ENCODE measurements at regions of chr17 and their contacts with region 1.

Region 1: GRCh38 chr17:8248751-8249607 is at the start of gene PFAS:
- DNase-seq: peak; percentile 93
- ATAC-seq: peak; percentile 59
- H3K4me3 ChIP-seq: peak within 1 kb of the TSS; percentile 100
- H3K27ac ChIP-seq: peak within 1 kb of the TSS; percentile 94
- H3K4me1 ChIP-seq: peaks cover 10% of the 10 kb centered on the region
- H3K27me3 ChIP-seq: no peaks in the 10 kb centered on the region
- CTCF ChIP-seq: no peak
- total RNA-seq, gene PFAS: 29.0 and 59.6 TPM in 2 replicates

Region 2: DNA sequence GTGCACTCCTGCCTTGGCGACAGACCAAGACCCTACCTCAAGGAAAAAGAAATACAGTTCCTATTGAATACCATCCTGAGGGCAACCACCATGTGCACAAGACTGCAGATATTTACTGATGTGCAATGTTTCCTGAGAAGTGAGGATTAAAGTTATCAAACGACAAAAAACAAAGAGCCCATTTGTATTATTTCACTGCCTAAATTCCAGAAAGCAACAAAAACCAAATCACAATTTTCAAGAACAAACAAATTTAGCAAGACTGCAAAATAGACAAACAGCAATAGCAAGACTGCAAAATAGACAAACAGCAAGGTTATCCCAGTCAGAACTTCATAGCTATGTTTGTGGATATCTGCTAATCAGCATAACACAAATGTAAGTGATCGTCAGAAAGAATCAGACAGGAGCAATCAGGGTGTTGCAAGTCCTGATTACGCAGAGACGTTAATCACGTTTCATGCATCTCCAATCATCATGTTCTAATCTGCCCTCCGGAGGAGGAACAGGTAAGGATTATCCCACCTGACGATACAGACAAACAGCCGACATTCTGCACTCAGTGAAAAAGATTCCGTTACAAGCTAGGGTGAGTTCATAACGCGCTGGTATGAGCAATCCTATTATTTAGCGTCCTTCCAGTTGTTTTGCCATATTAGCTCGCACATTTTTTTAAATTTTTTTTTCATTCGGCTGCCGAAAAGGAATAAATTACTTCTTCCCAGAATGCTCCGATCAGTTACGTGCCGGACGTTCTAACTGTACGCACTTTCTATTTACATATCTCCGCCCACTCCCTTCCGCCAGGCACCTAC is 75.7 kb before region 1 on chr17:
- CTCF ChIA-PET with region 1: no interaction called
- POLR2A ChIA-PET with region 1: interaction called, 11 read pairs
- intact Hi-C with region 1: no loop called
- DNase-seq: peak; percentile 95
- ATAC-seq: peak; percentile 76
- H3K4me3 ChIP-seq: peak overlapping the region; percentile 65
- H3K27ac ChIP-seq: peak overlapping the region; percentile 94
- H3K4me1 ChIP-seq: peaks cover 18% of the 10 kb centered on the region
- H3K27me3 ChIP-seq: no peaks in the 10 kb centered on the region
- CTCF ChIP-seq: no peak

Region 3: DNA sequence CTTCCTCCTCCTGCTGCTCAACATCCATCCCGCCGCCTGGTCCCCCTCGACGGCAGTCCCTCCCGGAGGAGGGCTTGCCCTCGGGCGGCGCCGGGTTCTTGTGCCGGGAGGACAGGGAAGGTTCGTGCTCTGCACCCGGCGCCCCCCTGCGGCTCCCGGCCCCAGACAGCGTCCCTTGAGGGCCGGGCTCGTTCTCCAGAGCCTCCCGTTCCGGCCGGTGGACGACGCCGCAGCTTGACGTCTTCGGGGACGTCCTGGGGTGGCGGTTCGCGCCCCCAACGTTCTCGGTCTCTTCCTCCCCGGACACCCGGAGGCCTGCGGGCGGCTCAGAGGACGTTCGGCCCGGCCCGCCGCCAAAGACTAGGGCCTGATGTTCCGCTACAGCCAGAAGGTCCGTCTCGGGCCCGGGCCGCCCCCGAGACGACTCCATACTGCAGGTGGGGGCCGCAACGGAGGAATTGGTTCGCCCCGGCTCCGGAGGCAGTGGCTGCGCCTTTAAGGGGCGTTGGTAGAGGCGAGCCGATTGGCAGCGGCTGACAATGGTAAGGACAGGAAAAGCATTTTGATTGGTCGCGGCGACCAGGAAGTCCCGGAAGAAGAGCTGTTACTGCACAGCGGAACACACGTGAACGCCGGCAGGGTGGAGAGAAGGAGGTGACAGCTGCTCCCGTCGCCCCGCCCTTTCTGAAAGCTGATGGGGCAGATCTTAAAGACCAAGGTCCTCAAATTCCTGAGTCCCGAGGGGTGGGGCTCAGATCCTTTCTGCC is 59.1 kb before region 1 on chr17 and contains the start of gene BORCS6:
- CTCF ChIA-PET with region 1: no interaction called
- POLR2A ChIA-PET with region 1: interaction called, 3 read pairs
- intact Hi-C with region 1: loop called (anchors 2 kb)
- DNase-seq: peak; percentile 93
- ATAC-seq: peak; percentile 60
- H3K4me3 ChIP-seq: peak within 1 kb of the TSS; percentile 84
- H3K27ac ChIP-seq: peak within 1 kb of the TSS; percentile 58; the same call in 1 of the 2 replicates
- H3K4me1 ChIP-seq: peaks cover 19% of the 10 kb centered on the region
- H3K27me3 ChIP-seq: no peaks in the 10 kb centered on the region
- CTCF ChIP-seq: peak; percentile 17; the same call in 1 of the 2 replicates
- total RNA-seq, gene BORCS6: 5.9 and 7.3 TPM in 2 replicates

Region 4: GRCh38 chr17:8222630-8223356 is 26.2 kb before region 1 on chr17:
- CTCF ChIA-PET with region 1: interaction called, 4 read pairs
- POLR2A ChIA-PET with region 1: no interaction called
- intact Hi-C with region 1: loop called (anchors 2 kb)
- DNase-seq: peak; percentile 88
- ATAC-seq: peak; percentile 44
- H3K4me3 ChIP-seq: peak overlapping the region; percentile 82
- H3K27ac ChIP-seq: peak overlapping the region; percentile 91
- H3K4me1 ChIP-seq: peaks cover 10% of the 10 kb centered on the region
- H3K27me3 ChIP-seq: no peaks in the 10 kb centered on the region
- CTCF ChIP-seq: no peak

Region 5: DNA sequence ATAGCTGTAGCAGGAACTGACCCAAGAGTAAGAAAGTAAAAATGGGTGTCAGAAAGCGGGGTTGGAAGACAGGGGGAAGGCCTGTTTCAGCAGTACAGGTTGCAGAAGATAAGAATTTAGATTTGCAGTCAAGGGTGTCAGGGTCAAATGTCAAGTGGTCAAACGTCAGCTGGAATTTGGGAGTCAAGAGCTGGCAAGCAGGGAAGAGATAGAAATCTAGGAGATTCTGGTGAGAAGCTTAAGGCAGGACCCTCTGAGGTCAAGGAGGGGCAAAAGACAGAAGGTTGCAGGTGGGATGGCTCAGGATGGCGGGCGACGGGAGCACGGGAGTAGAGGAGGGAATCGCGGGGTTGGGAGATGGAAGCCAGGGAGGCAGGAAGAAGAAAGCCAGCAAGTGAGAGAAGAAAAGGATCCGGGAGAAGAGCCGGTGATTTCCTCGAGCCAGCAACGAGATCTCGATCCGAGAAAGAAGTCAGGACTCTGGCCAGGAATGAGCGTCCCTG is 45.9 kb after region 1 on chr17:
- CTCF ChIA-PET with region 1: no interaction called
- POLR2A ChIA-PET with region 1: interaction called, 7 read pairs
- intact Hi-C with region 1: loop called (anchors 2 kb)
- DNase-seq: no peak
- ATAC-seq: peak; percentile 2; the same call in 1 of the 2 replicates
- H3K4me3 ChIP-seq: peak overlapping the region; percentile 78
- H3K27ac ChIP-seq: no peak overlapping the region
- H3K4me1 ChIP-seq: no peaks in the 10 kb centered on the region
- H3K27me3 ChIP-seq: no peaks in the 10 kb centered on the region
- CTCF ChIP-seq: no peak

Region 6: GRCh38 chr17:8300627-8301242 is 51.8 kb after region 1 on chr17:
- CTCF ChIA-PET with region 1: interaction called, 4 read pairs
- POLR2A ChIA-PET with region 1: interaction called, 7 read pairs
- intact Hi-C with region 1: loop called (anchors 2 kb)
- DNase-seq: peak; percentile 69
- ATAC-seq: peak; percentile 96
- H3K4me3 ChIP-seq: no peak overlapping the region
- H3K27ac ChIP-seq: no peak overlapping the region
- H3K4me1 ChIP-seq: no peaks in the 10 kb centered on the region
- H3K27me3 ChIP-seq: no peaks in the 10 kb centered on the region
- CTCF ChIP-seq: peak; percentile 74

Region 7: GRCh38 chr17:8421571-8421970 is 172.6 kb after region 1 on chr17:
- CTCF ChIA-PET with region 1: no interaction called
- POLR2A ChIA-PET with region 1: no interaction called
- intact Hi-C with region 1: no loop called
- DNase-seq: peak; percentile 62
- ATAC-seq: peak; percentile 55
- H3K4me3 ChIP-seq: no peak overlapping the region
- H3K27ac ChIP-seq: no peak overlapping the region
- H3K4me1 ChIP-seq: 0 out of 2 replicates have a peak, but pooled peaks cover 5% of the 10 kb centered on the region
- H3K27me3 ChIP-seq: no peaks in the 10 kb centered on the region
- CTCF ChIP-seq: 0 out of 2 replicates have a peak, but pooled peaks have one; percentile 18

Region 8: GRCh38 chr17:8785547-8786413 is 536.8 kb after region 1 on chr17:
- CTCF ChIA-PET with region 1: interaction called, 14 read pairs
- POLR2A ChIA-PET with region 1: no interaction called
- intact Hi-C with region 1: no loop called
- DNase-seq: peak; percentile 71
- ATAC-seq: peak; percentile 74
- H3K4me3 ChIP-seq: no peak overlapping the region
- H3K27ac ChIP-seq: no peak overlapping the region
- H3K4me1 ChIP-seq: no peaks in the 10 kb centered on the region
- H3K27me3 ChIP-seq: 0 out of 2 replicates have a peak, but pooled peaks cover 14% of the 10 kb centered on the region
- CTCF ChIP-seq: peak; percentile 77